HEK293 (cell line): ENCODE measurements at regions of chr3 and their contacts with region 1.

Region 1: DNA sequence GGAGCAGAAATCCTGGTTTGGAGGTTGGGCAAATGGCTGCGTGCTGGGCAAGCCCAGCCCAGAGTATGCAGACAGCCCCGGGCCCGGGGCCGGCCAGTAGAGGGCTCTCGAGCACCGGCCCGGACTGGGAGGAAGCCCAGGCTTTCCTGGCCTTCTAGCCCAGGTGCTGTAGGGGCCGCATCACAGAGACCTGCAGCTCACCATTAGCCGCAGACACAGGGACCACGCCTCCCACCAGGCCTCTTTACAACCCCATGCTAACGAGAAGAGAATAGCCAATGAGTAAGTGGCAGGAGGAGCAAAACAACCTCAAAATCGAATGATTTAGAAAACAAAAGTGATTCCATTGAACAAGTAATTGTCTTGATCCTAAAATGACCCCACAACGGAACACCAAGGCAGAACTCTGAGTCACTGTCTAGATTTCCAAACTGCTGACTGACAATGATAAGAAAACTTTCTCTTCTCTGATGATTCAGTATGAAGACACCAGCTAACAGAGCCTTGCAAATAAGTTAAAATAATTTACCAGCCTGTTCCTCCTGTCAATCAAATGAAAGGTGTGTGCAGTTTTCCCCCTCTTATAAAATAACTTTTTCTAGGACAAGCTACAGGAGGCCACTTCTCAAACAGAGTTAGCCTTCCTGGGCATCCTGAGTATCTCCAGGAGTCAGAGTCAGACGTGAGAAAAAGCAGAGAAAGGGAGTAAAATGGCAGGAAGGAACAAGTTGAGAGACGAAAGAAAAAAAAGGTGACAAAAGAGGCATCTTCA is 102.2 kb downstream of the DGKG start:
- H3K4me3 ChIP-seq: no peak overlapping the region
- H3K27ac ChIP-seq: no peak overlapping the region
- H3K4me1 ChIP-seq: no peaks in the 10 kb centered on the region
- CTCF ChIP-seq: peak; percentile 58; the same call in 1 of the 2 replicates

Region 2: DNA sequence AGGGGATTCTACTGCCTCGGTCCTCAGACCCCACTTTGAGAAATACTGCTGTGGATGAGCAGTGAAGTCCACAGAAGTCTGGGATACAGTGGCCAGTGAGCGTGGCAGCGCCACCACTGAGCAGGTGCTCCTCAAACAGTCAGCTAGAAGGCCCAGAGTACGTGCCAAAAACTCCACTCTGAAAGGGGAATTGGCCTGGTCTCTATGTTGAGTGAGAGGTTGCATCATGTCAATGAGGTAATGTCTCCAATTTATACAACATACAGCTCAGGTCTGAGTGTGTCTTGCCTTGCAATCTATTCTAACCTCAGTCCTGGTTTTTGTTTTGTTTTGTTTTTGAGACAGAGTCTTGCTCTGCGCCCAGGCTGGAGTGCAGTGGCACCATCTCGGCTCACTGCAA is 97.6 kb before region 1 on chr3:
- CTCF ChIA-PET with region 1: no interaction called
- POLR2A ChIA-PET with region 1: no interaction called
- H3K4me3 ChIP-seq: no peak overlapping the region
- H3K27ac ChIP-seq: no peak overlapping the region
- H3K4me1 ChIP-seq: peaks cover 8% of the 10 kb centered on the region; the same call in 1 of the 2 replicates
- CTCF ChIP-seq: no peak

Region 3: DNA sequence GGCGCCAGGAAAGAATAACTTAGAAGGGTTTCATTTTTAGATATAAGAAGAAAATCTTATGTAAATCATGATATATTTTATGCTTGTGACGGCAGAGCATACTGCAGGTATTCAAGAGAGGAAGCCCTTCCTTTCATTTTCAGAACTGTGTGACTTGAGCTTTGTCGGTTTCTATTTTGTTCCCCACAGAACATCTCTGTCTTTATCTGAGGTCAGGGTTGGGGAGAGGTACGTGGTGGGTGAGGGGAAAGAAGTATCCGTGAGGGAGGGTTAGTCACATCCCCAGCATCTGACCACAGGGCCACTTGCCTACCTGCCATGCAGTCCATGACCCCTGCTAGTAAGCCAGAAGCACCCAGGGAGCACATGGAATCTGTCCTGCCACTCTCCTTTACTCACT is 24.2 kb before region 1 on chr3:
- CTCF ChIA-PET with region 1: no interaction called
- POLR2A ChIA-PET with region 1: no interaction called
- H3K4me3 ChIP-seq: no peak overlapping the region
- H3K27ac ChIP-seq: no peak overlapping the region
- H3K4me1 ChIP-seq: no peaks in the 10 kb centered on the region
- CTCF ChIP-seq: no peak

Region 4: GRCh38 chr3:186247821-186248814 is 11.7 kb before region 1 on chr3:
- CTCF ChIA-PET with region 1: interaction called, 16 read pairs
- POLR2A ChIA-PET with region 1: no interaction called
- H3K4me3 ChIP-seq: no peak overlapping the region
- H3K27ac ChIP-seq: no peak overlapping the region
- H3K4me1 ChIP-seq: no peaks in the 10 kb centered on the region
- CTCF ChIP-seq: no peak